Thyroid gland (tissue), 4 donors: ENCODE measurements at regions of chr7 and their contacts with region 1.

Region 1: DNA sequence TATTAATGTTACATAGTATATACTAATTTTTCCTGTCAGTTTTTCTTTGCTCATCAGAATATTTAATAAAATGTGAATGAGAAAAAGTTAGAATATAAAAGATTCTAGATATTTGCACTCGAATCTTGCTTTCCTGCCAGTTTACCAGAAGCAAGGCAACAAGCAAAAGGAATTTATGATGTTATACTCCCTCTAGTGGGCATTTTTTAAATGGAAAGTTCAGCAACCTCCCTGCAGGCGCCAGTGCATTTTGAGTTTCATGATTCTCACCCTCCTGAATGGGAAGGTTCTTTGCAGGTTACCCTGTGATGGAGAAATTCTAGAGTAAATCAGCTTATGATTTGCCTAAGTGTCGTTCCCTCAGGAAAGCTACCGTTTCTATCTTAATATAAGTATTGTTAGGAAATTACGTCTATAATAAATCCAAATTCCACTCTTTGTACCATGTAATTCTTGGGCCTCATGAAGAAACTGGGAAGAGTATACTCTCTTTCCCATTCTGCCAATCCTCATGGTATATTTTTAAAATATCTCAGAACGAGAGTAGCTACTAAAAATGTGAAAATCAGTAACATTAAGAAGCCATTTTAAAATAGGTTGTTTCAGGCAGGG is 350.0 kb downstream of the CRPPA start:
- DNase-seq: no peak
- H3K4me3 ChIP-seq: no peak overlapping the region
- H3K27ac ChIP-seq: no peak overlapping the region
- H3K4me1 ChIP-seq: peaks cover 0 to 3% of the 10 kb centered on the region in 2 donors
- H3K27me3 ChIP-seq: no peaks in the 10 kb centered on the region
- CTCF ChIP-seq: peak; percentile 53 to 87 (median 71)
- POLR2A ChIP-seq: no peak

Region 2: GRCh38 chr7:16564909-16565426 is 493.6 kb after region 1 on chr7:
- intact Hi-C with region 1: loop called (anchors 10 kb)
- DNase-seq: peak in 1 of 2 donors; percentile 13
- H3K4me3 ChIP-seq: no peak overlapping the region
- H3K27ac ChIP-seq: no peak overlapping the region
- H3K4me1 ChIP-seq: no peaks in the 10 kb centered on the region
- H3K27me3 ChIP-seq: no peaks in the 10 kb centered on the region
- CTCF ChIP-seq: peak; percentile 20 to 76 (median 68)
- POLR2A ChIP-seq: no peak